Panc1 (cell line): ENCODE measurements at regions of chr3 and their contacts with region 1.

Region 1: DNA sequence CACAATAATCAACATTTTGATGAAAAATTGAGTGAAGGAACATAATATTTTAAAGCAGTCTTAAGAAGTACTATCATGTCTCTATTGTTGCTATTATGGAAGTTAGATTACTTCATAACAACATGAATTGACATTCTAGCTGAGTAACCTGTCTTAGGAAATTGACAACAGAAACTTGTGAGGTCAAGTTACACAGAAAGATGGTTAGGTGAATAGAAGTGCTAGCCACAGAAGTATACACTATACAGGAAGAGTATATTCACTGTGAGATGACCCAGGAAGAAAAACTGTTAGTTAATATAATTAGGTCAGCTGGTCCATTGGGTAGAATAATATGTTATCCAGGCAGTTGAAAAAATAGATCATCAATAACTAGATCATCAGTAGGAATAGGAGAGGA is 31.2 kb downstream of the MLF1 start:
- DNase-seq: no peak
- ATAC-seq: no peak
- H3K4me3 ChIP-seq: no peak overlapping the region
- H3K27ac ChIP-seq: no peak overlapping the region
- H3K4me1 ChIP-seq: no peaks in the 10 kb centered on the region
- H3K27me3 ChIP-seq: no peaks in the 10 kb centered on the region
- CTCF ChIP-seq: no peak

Region 2: DNA sequence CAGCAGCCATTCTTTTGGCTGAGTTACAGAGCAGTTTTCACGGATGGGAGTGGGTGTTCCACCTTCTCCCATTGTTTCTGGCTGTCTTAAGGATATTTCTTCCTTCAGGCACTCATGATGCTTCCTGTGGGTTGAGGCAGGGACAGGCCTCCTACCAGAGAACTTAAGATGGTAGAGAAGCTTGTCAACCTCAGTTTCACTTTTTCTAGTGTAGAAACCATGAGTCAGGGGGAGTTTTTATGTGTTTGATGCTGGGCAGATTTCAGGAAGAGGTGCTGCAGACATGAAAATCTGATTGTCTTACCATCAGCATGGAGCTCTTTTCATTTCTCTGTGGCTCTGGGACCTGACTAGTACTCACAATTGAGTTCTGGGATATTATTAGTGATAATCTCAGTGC is 1050.3 kb before region 1 on chr3:
- CTCF ChIA-PET with region 1: interaction called, 13 read pairs
- POLR2A ChIA-PET with region 1: no interaction called
- in situ Hi-C with region 1: no loop called
- intact Hi-C with region 1: no loop called
- DNase-seq: no peak
- ATAC-seq: no peak
- H3K4me3 ChIP-seq: no peak overlapping the region
- H3K27ac ChIP-seq: no peak overlapping the region
- H3K4me1 ChIP-seq: no peaks in the 10 kb centered on the region
- H3K27me3 ChIP-seq: no peaks in the 10 kb centered on the region
- CTCF ChIP-seq: no peak

Region 3: GRCh38 chr3:158672293-158673176 is 70.3 kb after region 1 on chr3 and contains the start of gene LXN:
- CTCF ChIA-PET with region 1: no interaction called
- POLR2A ChIA-PET with region 1: no interaction called
- in situ Hi-C with region 1: no loop called
- intact Hi-C with region 1: no loop called
- DNase-seq: peak; percentile 71
- ATAC-seq: peak; percentile 99
- H3K4me3 ChIP-seq: peak within 1 kb of the TSS; percentile 67 to 84
- H3K27ac ChIP-seq: peak within 1 kb of the TSS; percentile 89
- H3K4me1 ChIP-seq: peaks cover 41% of the 10 kb centered on the region
- H3K27me3 ChIP-seq: no peaks in the 10 kb centered on the region
- CTCF ChIP-seq: peak; percentile 89
- total RNA-seq, gene LXN: 301 TPM